Activated CD4-positive, alpha-beta memory T cell treated with anti-CD3 and anti-CD28 coated beads for 36 hours (primary cell): ENCODE measurements at regions of chr1 and their contacts with region 1.

Region 1: DNA sequence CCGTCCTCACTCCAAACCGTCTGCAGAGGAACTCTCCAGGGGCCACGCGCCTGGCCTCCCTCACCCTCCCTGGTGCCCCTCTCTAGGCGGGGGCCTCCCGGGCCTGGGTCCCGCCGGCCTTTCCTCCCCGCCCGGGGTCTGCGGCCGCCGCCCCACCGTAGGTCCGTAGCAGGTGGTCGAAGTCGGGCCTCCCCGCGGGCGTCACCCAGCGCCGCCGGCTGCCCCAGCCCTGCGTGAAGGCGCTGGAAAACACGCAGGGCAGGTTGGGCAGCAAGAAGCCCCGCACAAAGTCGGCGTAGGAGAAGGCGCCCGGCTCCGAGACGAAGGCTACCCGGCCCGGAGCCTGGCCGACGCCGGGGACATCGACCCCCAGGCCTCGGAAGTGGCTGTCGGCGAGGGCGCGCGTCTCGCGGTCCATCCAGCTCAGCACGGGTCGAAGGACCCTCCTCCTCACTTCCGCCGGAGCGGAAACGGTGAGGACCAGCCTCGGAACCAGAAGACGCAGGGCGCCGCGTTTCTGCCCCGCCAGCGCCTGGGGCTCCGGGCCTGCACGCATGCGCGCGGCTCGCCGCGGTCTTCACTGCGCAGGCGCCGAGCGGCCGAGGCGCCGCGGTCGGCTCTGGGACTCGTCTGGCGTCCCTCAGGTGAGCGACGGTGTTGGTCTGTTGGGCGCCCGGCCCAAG is at the starts of genes JMJD4 and SNAP47:
- DNase-seq: peak; percentile 95
- H3K4me3 Mint-ChIP-seq: peak within 1 kb of the TSS; percentile 94
- H3K27ac Mint-ChIP-seq: peak within 1 kb of the TSS; percentile 79
- H3K4me1 Mint-ChIP-seq: peaks cover 40% of the 10 kb centered on the region
- H3K27me3 Mint-ChIP-seq: no peaks in the 10 kb centered on the region
- total RNA-seq, gene JMJD4: 15.2 to 16.1 TPM
- total RNA-seq, gene SNAP47: 30.9 to 32.5 TPM

Region 2: DNA sequence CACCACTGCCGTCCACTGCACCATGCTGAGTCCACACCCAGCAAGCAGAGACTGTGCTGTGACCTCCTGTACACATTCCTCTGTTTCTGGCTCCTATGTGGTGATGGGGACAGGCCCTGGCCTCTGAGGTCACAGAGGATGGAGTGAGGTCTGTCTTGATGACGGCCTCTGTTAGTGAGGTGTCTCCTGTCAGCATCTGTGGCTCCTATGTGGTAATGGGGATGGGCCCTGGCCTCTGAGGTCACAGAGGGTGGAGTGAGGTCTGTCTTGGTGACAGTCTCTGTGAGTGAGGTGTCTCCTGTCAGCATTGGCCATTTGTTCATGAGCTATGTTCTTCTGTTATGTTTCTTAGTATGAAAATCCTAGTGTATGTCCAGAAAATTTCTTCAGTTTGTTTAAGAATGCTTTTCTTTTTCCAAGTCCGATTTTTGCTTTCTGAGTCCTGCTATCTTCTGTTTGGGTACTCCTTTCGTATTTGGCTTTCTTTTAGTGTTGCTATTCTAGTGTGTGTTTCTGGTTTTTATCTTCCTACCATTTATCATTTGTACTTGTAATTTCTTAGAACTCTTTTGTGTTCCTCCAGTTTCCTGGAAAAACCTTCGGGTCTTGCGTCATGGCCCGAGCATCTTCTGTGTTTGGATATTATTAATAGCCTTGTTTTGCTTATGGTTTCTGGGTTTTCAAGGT is 13.6 kb after region 1 on chr1:
- CTCF ChIA-PET with region 1: no interaction called
- POLR2A ChIA-PET with region 1: no interaction called
- intact Hi-C with region 1: no loop called
- DNase-seq: peak; percentile 75
- H3K4me3 Mint-ChIP-seq: peak overlapping the region; percentile 33
- H3K27ac Mint-ChIP-seq: peak overlapping the region; percentile 94
- H3K4me1 Mint-ChIP-seq: peaks cover 45% of the 10 kb centered on the region
- H3K27me3 Mint-ChIP-seq: no peaks in the 10 kb centered on the region

Region 3: GRCh38 chr1:227787513-227788270 is 52.7 kb after region 1 on chr1:
- CTCF ChIA-PET with region 1: no interaction called
- POLR2A ChIA-PET with region 1: no interaction called
- intact Hi-C with region 1: loop called (anchors 2 kb)
- DNase-seq: peak; percentile 97
- H3K4me3 Mint-ChIP-seq: peak overlapping the region; percentile 68
- H3K27ac Mint-ChIP-seq: no peak overlapping the region
- H3K4me1 Mint-ChIP-seq: peaks cover 11% of the 10 kb centered on the region
- H3K27me3 Mint-ChIP-seq: no peaks in the 10 kb centered on the region

Region 4: DNA sequence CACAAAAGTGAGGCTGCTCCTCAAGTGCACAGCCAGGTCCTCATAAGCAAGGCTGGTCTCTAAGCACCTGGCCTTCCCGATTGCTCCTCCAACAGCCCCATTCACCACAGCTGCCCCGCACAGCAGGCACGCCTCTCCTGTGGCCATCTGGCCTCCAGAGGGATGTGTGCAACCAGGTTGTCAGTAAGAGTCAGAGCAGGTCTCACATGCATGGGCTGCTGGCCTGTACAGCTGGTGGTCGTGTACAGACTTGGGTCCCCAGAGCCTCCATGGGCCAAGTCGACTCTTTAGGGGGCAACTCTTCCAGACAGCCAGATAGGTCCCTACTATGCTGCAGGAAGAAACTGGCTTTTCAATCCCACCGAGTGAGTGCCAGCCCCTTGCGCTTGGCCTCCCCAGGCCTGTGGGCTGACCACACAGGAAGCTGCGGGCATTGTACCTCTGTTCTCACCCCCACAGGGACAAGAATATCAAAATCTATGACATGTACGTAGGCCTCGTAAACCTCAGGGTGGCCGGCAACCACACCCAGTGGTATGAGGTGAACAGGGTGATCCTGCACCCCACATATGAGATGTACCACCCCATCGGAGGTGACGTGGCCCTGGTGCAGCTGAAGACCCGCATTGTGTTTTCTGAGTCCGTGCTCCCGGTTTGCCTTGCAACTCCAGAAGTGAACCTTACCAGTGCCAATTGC is 81.9 kb after region 1 on chr1:
- CTCF ChIA-PET with region 1: no interaction called
- POLR2A ChIA-PET with region 1: no interaction called
- intact Hi-C with region 1: no loop called
- DNase-seq: no peak
- H3K4me3 Mint-ChIP-seq: no peak overlapping the region
- H3K27ac Mint-ChIP-seq: no peak overlapping the region
- H3K4me1 Mint-ChIP-seq: no peaks in the 10 kb centered on the region
- H3K27me3 Mint-ChIP-seq: no peaks in the 10 kb centered on the region

Region 5: DNA sequence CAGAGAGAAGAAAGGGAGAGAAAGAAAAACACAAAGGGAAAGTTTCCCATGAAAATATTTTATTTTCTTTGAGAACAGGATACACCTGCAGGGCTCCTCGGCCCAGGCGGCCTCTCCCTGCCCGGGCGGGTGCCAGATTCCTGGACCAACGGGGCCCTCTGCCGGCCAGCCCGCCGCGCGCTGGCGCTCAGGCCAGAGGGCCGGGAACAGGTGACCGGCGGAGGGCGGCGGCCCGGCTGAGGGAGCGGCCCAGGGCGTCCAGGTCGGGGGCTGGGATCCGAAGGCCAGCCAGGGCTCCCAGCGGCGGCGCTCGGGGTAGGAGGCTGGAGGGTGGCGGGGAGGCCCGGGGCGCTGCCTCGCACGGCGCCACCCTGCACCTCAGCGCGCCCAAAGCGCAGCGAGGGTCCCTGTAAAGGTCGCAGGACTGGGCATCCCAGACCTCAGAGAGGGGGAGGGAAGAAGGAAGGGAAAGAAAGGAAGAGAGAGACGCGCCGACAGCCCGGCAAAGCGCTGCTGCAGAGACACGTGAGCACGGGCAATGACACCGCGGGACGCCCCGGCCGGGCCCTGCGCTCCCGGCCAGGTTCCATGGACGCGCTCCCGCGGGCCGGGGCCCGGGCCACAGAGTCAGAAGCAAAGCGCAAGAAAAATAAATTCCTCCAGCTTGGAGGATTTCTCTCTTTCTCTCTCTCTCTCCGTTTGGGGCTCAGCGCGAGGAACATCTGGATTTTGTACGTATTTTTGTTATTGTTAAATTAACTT is 211.8 kb after region 1 on chr1:
- CTCF ChIA-PET with region 1: interaction called, 5 read pairs
- POLR2A ChIA-PET with region 1: no interaction called
- intact Hi-C with region 1: loop called (anchors 1 kb)
- DNase-seq: peak; percentile 73
- H3K4me3 Mint-ChIP-seq: peak overlapping the region; percentile 68
- H3K27ac Mint-ChIP-seq: no peak overlapping the region
- H3K4me1 Mint-ChIP-seq: peaks cover 6% of the 10 kb centered on the region
- H3K27me3 Mint-ChIP-seq: peaks cover 15% of the 10 kb centered on the region